ENCODE measurements at regions of chr4 and their contacts with region 1.

Region 1: GRCh38 chr4:109375778-109376414 is 57.7 kb upstream of the SEC24B start:
- DNase-seq: no peak
- H3K4me3 ChIP-seq: no peak overlapping the region
- H3K4me3 Mint-ChIP-seq: no peak overlapping the region
- H3K27ac Mint-ChIP-seq: no peak overlapping the region
- H3K4me1 ChIP-seq: no peaks in the 10 kb centered on the region
- H3K4me1 Mint-ChIP-seq: no peaks in the 10 kb centered on the region
- H3K27me3 ChIP-seq: peaks cover 1% of the 10 kb centered on the region
- H3K27me3 Mint-ChIP-seq: peaks cover 6% of the 10 kb centered on the region
- CTCF ChIP-seq: no peak

Region 2: DNA sequence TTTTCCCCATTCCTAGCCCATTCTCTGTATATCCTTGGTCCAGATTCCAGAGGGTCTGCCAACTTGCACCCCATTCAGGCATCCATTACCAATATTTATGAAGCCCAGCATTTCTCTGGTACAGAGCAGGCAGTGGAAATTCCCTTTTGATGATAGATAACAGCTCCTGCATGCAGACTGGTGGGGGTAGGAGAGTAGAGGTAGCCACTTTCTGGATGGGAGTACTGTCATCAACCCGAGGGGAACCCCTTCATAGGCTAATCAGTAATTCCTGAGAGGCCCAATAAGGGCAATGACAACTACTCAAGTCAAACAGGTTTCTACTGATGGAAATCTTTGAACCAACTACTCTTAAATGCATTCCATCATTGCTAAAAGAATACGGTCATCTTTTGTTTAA is 137.2 kb before region 1 on chr4:
- CTCF ChIA-PET with region 1: no interaction called
- POLR2A ChIA-PET with region 1: no interaction called
- intact Hi-C with region 1: no loop called
- DNase-seq: no peak
- H3K4me3 ChIP-seq: no peak overlapping the region
- H3K4me3 Mint-ChIP-seq: no peak overlapping the region
- H3K27ac Mint-ChIP-seq: no peak overlapping the region
- H3K4me1 ChIP-seq: no peaks in the 10 kb centered on the region
- H3K4me1 Mint-ChIP-seq: no peaks in the 10 kb centered on the region
- H3K27me3 ChIP-seq: no peaks in the 10 kb centered on the region
- H3K27me3 Mint-ChIP-seq: no peaks in the 10 kb centered on the region
- CTCF ChIP-seq: no peak

Region 3: GRCh38 chr4:109319684-109320083 is 56.2 kb before region 1 on chr4:
- CTCF ChIA-PET with region 1: no interaction called
- POLR2A ChIA-PET with region 1: no interaction called
- intact Hi-C with region 1: loop called (anchors 2 kb)
- DNase-seq: no peak
- H3K4me3 ChIP-seq: no peak overlapping the region
- H3K4me3 Mint-ChIP-seq: no peak overlapping the region
- H3K27ac Mint-ChIP-seq: no peak overlapping the region
- H3K4me1 ChIP-seq: no peaks in the 10 kb centered on the region
- H3K4me1 Mint-ChIP-seq: no peaks in the 10 kb centered on the region
- H3K27me3 ChIP-seq: no peaks in the 10 kb centered on the region
- H3K27me3 Mint-ChIP-seq: no peaks in the 10 kb centered on the region
- CTCF ChIP-seq: no peak

Region 4: DNA sequence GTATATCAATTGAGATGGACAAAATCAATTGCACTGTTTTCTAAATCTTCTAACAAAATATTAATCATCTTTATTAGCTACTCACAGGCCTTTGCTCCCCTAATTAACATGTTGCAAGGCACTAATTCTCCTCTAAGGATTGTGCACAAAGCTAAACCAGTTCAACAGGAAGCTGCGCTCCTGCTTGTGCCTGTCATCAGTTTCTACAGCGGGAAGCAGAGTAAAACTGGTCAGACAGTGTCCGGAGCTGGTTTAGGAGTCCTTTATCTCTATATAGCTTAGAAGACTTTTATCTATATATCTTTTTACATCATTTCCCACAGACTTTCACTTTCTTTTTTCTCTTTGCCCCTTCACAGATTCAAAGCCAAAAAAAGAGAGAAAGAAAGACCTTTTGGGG is 743.4 kb after region 1 on chr4:
- CTCF ChIA-PET with region 1: no interaction called
- POLR2A ChIA-PET with region 1: no interaction called
- intact Hi-C with region 1: no loop called
- DNase-seq: peak; percentile 62 to 65
- H3K4me3 ChIP-seq: no peak overlapping the region
- H3K4me3 Mint-ChIP-seq: peak overlapping the region; percentile 29
- H3K27ac Mint-ChIP-seq: no peak overlapping the region
- H3K4me1 ChIP-seq: peaks cover 16% of the 10 kb centered on the region
- H3K4me1 Mint-ChIP-seq: no peaks in the 10 kb centered on the region
- H3K27me3 ChIP-seq: no peaks in the 10 kb centered on the region
- H3K27me3 Mint-ChIP-seq: no peaks in the 10 kb centered on the region
- CTCF ChIP-seq: no peak

Measured in Caco-2 (cell line).